ENCODE measurements at regions of chr7 and their contacts with region 1.

Region 1: DNA sequence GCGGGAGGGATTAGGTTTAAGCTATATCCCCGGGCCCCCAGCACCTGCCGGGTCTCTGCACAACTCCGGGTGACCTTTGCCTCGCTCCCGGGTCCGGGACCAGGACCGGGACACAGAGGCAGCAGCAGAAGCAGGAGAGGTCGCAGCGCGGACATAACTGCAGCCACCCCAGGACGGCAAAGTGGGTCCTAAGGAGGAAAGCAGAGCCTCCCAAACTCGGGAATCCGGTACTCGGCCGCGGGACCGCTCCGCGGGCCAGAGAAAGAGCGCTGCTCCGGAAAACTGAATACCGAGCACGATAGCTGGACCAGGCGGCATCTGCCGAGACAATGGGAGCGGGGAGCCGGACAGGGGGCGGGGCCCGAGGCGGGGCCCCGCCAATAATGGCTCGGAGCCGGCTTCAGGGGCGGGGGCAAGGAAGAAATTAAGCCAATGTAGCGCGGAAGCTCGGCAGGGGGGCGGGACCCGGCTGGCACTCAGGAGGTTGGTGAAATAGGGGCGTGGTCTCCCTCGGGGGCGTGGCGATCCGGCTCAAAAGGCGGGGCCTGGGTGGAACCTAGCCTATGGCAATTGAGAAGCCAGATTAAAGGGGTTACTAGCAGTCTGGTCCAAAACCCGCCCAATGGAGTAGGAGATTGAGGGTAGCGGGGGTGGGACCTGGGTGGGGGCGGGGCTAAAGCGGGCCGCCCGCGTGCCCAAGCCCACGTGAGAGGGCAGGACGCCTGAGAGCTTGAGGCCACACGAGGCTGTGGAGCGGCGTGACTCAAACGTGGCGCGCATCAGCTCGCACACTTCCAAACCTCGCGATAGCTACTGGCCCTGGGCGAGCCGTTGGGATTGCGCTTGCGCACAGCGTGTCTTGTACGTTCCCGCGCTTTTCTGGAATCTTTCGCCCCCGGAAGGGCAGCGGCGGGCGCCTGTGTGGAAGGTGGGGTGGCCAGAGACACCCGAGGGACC is at the starts of genes GPC2 and STAG3:
- DNase-seq: peak; percentile 97
- ATAC-seq: peak; percentile 94
- H3K4me3 ChIP-seq: peak within 1 kb of the TSS; percentile 64 to 78 (median 70)
- H3K4me3 Mint-ChIP-seq: peak within 1 kb of the TSS; percentile 73
- H3K27ac ChIP-seq: peak within 1 kb of the TSS in 1 of 2 donors; percentile 39
- H3K27ac Mint-ChIP-seq: peak within 1 kb of the TSS; percentile 27
- H3K4me1 ChIP-seq: peaks cover 11 to 22% of the 10 kb centered on the region in 2 donors
- H3K4me1 Mint-ChIP-seq: peaks cover 26% of the 10 kb centered on the region
- H3K27me3 ChIP-seq: no peaks in the 10 kb centered on the region
- H3K27me3 Mint-ChIP-seq: no peaks in the 10 kb centered on the region
- CTCF ChIP-seq: no peak
- total RNA-seq, gene GPC2: 4.1 and 6.1 TPM in 2 replicates
- total RNA-seq, gene STAG3: 22.0 and 24.8 TPM in 2 replicates

Region 2: DNA sequence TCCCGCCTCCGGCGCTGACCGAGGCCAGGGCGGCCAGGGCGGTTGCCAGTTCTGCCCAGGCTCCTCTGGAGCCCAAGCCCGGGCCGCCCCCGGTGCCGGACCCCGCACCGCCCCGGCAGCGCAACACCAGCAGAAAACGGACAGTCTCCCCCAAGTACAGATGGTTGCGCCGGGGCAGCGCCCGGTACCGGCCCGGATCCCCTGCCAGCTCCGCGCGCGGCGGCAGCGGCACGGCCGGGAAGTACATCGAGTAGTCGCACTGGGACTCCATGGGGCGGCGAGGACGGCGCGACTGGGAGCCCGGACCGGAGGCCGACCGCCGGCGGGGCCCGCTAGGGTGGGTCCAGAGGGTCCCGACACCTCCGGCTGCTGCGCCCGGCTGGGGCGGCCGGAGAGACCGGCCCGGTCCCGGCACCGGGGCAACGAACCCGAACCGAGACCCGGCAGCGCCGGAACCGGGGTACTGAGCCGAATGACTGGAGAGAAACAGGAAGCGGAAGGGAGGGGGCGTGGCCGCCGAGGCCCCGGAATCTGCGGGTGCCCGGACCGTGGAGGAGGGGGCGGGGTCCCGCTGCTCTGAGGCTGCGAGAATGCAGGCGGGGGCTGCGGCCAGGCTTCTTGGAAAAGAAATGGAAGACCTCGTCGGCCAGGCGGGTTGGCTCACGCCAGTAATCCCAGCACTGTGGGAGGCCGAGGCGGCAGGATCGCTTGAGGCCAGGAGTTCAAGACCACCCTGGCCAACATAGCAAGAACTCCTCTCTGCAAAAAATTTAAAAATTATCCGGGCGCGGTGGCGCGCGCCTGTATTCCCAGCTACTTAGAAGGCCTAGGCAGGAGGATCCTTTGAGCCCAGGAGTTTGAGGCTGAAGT is 18.9 kb before region 1 on chr7 and contains the start of gene TRAPPC14:
- CTCF ChIA-PET with region 1: no interaction called
- POLR2A ChIA-PET with region 1: interaction called, 7 read pairs
- intact Hi-C with region 1: loop called (anchors 1 kb)
- DNase-seq: peak; percentile 93
- ATAC-seq: peak; percentile 93
- H3K4me3 ChIP-seq: peak within 1 kb of the TSS; percentile 56 to 95 (median 73)
- H3K4me3 Mint-ChIP-seq: peak within 1 kb of the TSS; percentile 89
- H3K27ac ChIP-seq: peak within 1 kb of the TSS; percentile 68 to 84
- H3K27ac Mint-ChIP-seq: peak within 1 kb of the TSS; percentile 90
- H3K4me1 ChIP-seq: peaks cover 22 to 27% of the 10 kb centered on the region in 2 donors
- H3K4me1 Mint-ChIP-seq: peaks cover 43% of the 10 kb centered on the region
- H3K27me3 ChIP-seq: no peaks in the 10 kb centered on the region
- H3K27me3 Mint-ChIP-seq: no peaks in the 10 kb centered on the region
- CTCF ChIP-seq: no peak
- total RNA-seq, gene TRAPPC14: 71.2 and 75.8 TPM in 2 replicates

Region 3: GRCh38 chr7:100208911-100209408 is 31.6 kb after region 1 on chr7:
- CTCF ChIA-PET with region 1: interaction called, 3 read pairs
- POLR2A ChIA-PET with region 1: interaction called, 7 read pairs
- intact Hi-C with region 1: loop called (anchors 5 kb)
- DNase-seq: peak; percentile 30
- ATAC-seq: no peak
- H3K4me3 ChIP-seq: peak overlapping the region in 1 of 5 experiments; percentile 10
- H3K4me3 Mint-ChIP-seq: peak overlapping the region; percentile 46
- H3K27ac ChIP-seq: no peak overlapping the region
- H3K27ac Mint-ChIP-seq: peak overlapping the region; percentile 85
- H3K4me1 ChIP-seq: peaks cover 42 to 50% of the 10 kb centered on the region in 2 donors
- H3K4me1 Mint-ChIP-seq: peaks cover 64% of the 10 kb centered on the region
- H3K27me3 ChIP-seq: no peaks in the 10 kb centered on the region
- H3K27me3 Mint-ChIP-seq: no peaks in the 10 kb centered on the region
- CTCF ChIP-seq: no peak

Region 4: GRCh38 chr7:100221231-100221718 is 44.0 kb after region 1 on chr7:
- CTCF ChIA-PET with region 1: interaction called, 5 read pairs
- POLR2A ChIA-PET with region 1: no interaction called
- intact Hi-C with region 1: loop called (anchors 2 kb)
- DNase-seq: peak; percentile 84
- ATAC-seq: peak; percentile 56
- H3K4me3 ChIP-seq: peak overlapping the region in 4 of 5 experiments; percentile 53 to 65 (median 64)
- H3K4me3 Mint-ChIP-seq: peak overlapping the region; percentile 85
- H3K27ac ChIP-seq: peak overlapping the region; percentile 97 to 100
- H3K27ac Mint-ChIP-seq: peak overlapping the region; percentile 95
- H3K4me1 ChIP-seq: peaks cover 42 to 54% of the 10 kb centered on the region in 2 donors
- H3K4me1 Mint-ChIP-seq: peaks cover 74% of the 10 kb centered on the region
- H3K27me3 ChIP-seq: no peaks in the 10 kb centered on the region
- H3K27me3 Mint-ChIP-seq: no peaks in the 10 kb centered on the region
- CTCF ChIP-seq: no peak

Region 5: GRCh38 chr7:100516135-100516812 is 339.0 kb after region 1 on chr7:
- CTCF ChIA-PET with region 1: no interaction called
- POLR2A ChIA-PET with region 1: no interaction called
- intact Hi-C with region 1: no loop called
- DNase-seq: no peak
- ATAC-seq: no peak
- H3K4me3 ChIP-seq: no peak overlapping the region
- H3K4me3 Mint-ChIP-seq: no peak overlapping the region
- H3K27ac ChIP-seq: no peak overlapping the region
- H3K27ac Mint-ChIP-seq: no peak overlapping the region
- H3K4me1 ChIP-seq: peaks cover 4 to 14% of the 10 kb centered on the region in 2 donors
- H3K4me1 Mint-ChIP-seq: peaks cover 7% of the 10 kb centered on the region
- H3K27me3 ChIP-seq: peaks cover 0 to 2% (median 0%) of the 10 kb centered on the region in 4 experiments
- H3K27me3 Mint-ChIP-seq: peaks cover 3% of the 10 kb centered on the region
- CTCF ChIP-seq: no peak

Measured in B cell (primary cell).